ENCODE measurements at regions of chr12 and their contacts with region 1.

Region 1: DNA sequence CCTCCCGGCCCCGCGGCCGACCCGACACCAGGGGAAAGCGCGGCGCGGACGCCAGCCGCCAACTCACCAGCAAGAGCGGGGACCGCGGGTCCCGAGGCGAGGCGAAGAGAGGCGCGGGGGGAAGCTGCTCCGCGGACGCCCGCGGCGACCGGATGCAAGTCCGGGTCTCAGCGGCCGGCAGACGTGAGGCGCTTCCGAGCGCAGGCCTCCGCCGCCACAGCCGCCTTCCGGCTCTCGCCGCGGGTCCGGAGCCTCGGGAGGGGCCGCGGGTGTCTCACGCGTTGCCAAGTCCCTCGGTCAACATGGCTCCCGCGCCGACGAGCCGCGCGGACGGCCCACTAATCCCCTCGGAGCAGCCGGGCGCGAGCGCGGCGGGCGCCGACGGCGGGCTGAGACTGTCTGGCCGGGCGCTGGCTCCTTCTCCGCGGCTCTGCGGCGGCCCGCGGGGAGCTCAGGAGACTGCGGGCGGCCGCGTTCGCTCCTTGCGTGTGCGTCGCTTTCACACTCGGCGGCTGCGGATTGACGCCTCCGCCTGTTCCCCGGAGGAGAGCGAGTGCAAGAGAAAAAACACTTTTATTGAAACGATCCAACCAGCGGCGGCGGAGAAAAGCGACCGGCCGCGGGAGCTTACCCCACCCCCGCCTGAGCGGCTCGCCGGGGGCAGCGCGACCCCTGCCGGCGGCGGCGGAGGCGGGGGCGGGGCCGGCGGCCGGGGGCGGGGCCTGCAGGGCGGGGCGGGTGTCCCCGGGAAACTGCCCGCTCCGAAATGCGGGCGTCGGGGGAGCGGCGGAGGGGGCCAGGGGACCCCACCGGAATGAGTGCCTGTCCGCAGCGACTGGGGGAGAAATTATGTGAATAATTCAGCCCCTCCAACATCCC is at the start of gene CDK17:
- DNase-seq: peak; percentile 90
- H3K4me3 Mint-ChIP-seq: peak within 1 kb of the TSS; percentile 94
- H3K27ac Mint-ChIP-seq: peak within 1 kb of the TSS; percentile 94
- H3K4me1 Mint-ChIP-seq: peaks cover 48% of the 10 kb centered on the region
- H3K27me3 Mint-ChIP-seq: no peaks in the 10 kb centered on the region
- total RNA-seq, gene CDK17: 41.5 to 42.5 TPM

Region 2: DNA sequence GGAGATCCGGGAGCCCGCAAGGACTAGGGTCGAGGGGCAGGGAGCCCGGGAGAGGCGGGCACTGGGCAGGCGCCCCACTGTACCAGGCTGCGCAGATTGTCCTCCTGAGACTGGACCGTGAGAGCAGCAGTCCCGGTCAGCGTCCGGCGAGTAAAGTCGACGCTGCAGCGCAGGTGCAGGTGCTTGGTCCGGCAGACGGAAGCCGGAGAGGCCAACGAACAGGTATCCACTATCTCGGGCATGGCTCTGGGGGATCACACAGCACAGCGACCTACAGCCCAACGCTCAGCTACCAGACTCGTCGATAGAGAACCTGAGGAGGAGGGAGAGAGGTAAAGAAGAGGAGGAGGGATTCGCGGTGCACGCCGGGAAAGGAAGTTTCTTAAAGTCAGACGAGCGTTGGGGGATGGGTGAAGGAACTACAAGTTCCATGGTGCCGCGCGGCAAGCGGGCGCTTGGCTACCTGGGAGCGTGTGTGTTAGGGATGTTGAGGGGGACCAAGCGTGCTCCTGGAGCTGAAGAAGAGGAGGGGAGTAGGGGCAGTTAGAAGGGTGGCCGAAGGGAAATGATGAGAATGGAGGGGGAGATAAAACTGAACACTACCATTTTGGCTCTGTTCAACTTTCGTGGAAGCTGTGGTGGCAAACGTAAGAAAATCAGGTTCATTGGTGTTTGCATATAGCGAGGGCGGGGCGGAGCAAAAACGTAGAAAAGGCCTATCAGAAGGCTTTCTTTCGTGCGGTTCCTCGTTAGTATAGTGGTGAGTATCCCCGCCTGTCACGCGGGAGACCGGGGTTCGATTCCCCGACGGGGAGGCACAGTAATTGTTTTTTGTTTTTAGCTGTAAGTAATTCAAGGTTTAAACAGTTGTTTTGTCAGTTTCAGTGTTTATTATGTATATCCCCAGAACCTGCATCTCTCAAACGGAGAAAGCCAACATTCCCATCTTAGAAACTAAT is 364.6 kb before region 1 on chr12 and contains the start of gene LTA4H:
- CTCF ChIA-PET with region 1: no interaction called
- POLR2A ChIA-PET with region 1: interaction called, 15 read pairs
- DNase-seq: peak; percentile 97
- H3K4me3 Mint-ChIP-seq: no peak within 1 kb of the TSS
- H3K27ac Mint-ChIP-seq: no peak within 1 kb of the TSS
- H3K4me1 Mint-ChIP-seq: peaks cover 8% of the 10 kb centered on the region
- H3K27me3 Mint-ChIP-seq: no peaks in the 10 kb centered on the region
- total RNA-seq, gene LTA4H: 50.7 to 52.1 TPM

Region 3: GRCh38 chr12:96208801-96209549 is 191.2 kb before region 1 on chr12:
- CTCF ChIA-PET with region 1: interaction called, 19 read pairs
- POLR2A ChIA-PET with region 1: interaction called, 52 read pairs
- DNase-seq: no peak
- H3K4me3 Mint-ChIP-seq: peak overlapping the region; percentile 40
- H3K27ac Mint-ChIP-seq: peak overlapping the region; percentile 90
- H3K4me1 Mint-ChIP-seq: peaks cover 99% of the 10 kb centered on the region
- H3K27me3 Mint-ChIP-seq: no peaks in the 10 kb centered on the region

Region 4: GRCh38 chr12:96266238-96266637 is 133.9 kb before region 1 on chr12:
- CTCF ChIA-PET with region 1: interaction called, 8 read pairs
- POLR2A ChIA-PET with region 1: interaction called, 12 read pairs
- DNase-seq: no peak
- H3K4me3 Mint-ChIP-seq: no peak overlapping the region
- H3K27ac Mint-ChIP-seq: no peak overlapping the region
- H3K4me1 Mint-ChIP-seq: peaks cover 5% of the 10 kb centered on the region
- H3K27me3 Mint-ChIP-seq: no peaks in the 10 kb centered on the region

Region 5: GRCh38 chr12:96321941-96322340 is 78.2 kb before region 1 on chr12:
- CTCF ChIA-PET with region 1: no interaction called
- POLR2A ChIA-PET with region 1: no interaction called
- DNase-seq: no peak
- H3K4me3 Mint-ChIP-seq: no peak overlapping the region
- H3K27ac Mint-ChIP-seq: no peak overlapping the region
- H3K4me1 Mint-ChIP-seq: peaks cover 16% of the 10 kb centered on the region
- H3K27me3 Mint-ChIP-seq: no peaks in the 10 kb centered on the region

Region 6: DNA sequence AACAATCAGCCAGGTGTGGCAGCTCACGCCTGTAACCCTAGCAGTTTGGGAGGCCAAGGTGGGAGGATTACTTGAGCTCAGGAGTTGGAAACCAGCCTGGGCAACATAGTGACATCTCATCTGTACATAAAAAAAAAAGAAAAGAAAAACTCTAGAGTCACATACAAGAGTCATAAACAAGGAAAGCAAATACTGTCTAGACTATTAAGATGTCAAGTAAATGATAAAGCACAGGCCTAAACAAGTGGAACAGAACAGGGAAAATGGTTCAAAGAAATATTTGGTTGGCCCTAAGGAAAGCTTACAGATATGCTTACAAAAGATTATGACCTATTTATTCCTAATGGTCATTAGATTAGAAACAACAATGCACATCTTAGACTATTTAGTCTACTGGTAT is 12.2 kb before region 1 on chr12:
- CTCF ChIA-PET with region 1: interaction called, 20 read pairs
- POLR2A ChIA-PET with region 1: interaction called, 28 read pairs
- DNase-seq: no peak
- H3K4me3 Mint-ChIP-seq: no peak overlapping the region
- H3K27ac Mint-ChIP-seq: no peak overlapping the region
- H3K4me1 Mint-ChIP-seq: peaks cover 38% of the 10 kb centered on the region
- H3K27me3 Mint-ChIP-seq: no peaks in the 10 kb centered on the region

Region 7: DNA sequence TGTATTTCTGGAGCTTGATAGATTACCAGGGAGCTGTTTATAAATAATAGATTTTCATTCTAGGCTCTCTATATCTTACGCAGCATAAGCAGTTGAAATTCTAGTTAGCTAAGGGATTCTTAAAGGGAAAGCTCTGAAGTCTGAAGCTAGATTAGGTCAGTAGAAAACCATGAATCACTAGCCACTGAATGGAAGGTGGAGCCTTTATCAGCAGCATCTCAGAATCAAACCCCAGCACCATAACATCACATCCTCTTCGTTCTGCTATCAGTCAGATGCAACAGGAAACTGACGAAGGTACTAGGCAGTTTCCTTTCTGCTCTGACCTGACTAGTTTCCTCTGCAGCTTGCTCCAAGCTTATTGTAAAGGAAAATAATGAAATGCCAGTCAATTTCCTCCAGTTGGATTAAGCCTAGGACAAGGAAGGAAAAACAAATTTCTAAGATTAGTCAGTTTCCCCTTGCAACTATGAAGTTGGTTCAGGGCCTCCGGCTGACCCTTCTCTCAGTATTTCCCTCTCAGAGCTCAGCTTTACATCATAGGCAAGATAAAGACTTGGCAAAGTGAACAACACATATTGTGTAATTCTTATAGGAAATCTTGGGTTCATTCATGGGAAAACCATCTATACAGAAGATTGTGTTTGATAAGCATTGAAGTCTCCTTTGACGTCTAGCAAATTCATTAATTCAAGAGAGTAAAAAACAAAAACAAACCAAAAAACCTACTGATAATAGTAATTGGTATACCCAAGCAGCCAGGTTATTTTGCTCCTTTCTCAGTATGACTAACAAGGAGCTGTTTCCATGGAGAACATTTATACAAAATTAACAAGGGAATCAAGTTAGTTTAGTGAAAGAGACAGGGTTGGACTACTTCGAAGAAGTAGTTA is 45.8 kb after region 1 on chr12:
- CTCF ChIA-PET with region 1: interaction called, 65 read pairs
- POLR2A ChIA-PET with region 1: interaction called, 79 read pairs
- DNase-seq: peak; percentile 75
- H3K4me3 Mint-ChIP-seq: peak overlapping the region; percentile 49
- H3K27ac Mint-ChIP-seq: peak overlapping the region; percentile 95
- H3K4me1 Mint-ChIP-seq: peaks cover 52% of the 10 kb centered on the region
- H3K27me3 Mint-ChIP-seq: peaks cover 3% of the 10 kb centered on the region

Region 8: DNA sequence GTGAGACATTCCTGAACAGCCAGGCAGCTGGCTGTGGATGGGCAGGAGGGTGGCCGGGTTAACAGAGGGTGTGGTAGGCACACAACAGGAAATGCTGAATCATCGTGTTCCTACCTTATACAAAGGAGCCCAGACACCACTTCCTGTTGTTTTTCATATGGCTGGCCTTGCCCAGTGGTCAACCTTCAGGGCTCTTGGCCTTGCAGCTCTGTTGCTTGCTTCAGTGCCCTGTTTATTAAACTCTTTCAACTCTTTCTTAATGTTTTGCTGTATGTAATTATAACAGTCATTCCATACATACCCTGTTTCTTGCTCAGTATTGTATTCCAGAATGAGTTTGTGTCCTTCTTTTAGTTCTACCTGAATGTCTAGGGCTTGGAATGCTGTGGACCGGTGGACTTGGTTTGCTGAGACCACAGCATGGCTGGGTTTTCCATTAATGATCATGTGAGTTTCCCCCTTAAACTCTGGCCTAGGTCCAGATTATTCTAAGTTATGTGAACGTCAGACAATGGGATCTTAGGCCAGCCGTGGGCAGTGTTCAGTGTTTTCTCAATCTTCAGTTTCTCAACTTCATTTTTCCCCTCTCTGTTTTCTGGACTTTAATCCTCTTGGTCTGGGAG is 101.1 kb after region 1 on chr12:
- CTCF ChIA-PET with region 1: interaction called, 7 read pairs
- POLR2A ChIA-PET with region 1: interaction called, 46 read pairs
- DNase-seq: peak; percentile 57
- H3K4me3 Mint-ChIP-seq: peak overlapping the region; percentile 25
- H3K27ac Mint-ChIP-seq: peak overlapping the region; percentile 89
- H3K4me1 Mint-ChIP-seq: peaks cover 54% of the 10 kb centered on the region
- H3K27me3 Mint-ChIP-seq: no peaks in the 10 kb centered on the region

Region 9: GRCh38 chr12:96658124-96658725 is 258.1 kb after region 1 on chr12:
- CTCF ChIA-PET with region 1: no interaction called
- POLR2A ChIA-PET with region 1: no interaction called
- DNase-seq: no peak
- H3K4me3 Mint-ChIP-seq: no peak overlapping the region
- H3K27ac Mint-ChIP-seq: no peak overlapping the region
- H3K4me1 Mint-ChIP-seq: no peaks in the 10 kb centered on the region
- H3K27me3 Mint-ChIP-seq: no peaks in the 10 kb centered on the region

Measured in activated CD4-positive, alpha-beta memory T cell treated with anti-CD3 and anti-CD28 coated beads, Interleukin-2, amount 10 ng/mL, durations not matched to agents 7 days and 5 days (primary cell).